Activated T-helper 2 cell treated with anti-CD3 and anti-CD28 coated beads, Interferon-gamma antibody, Interleukin-2, Interleukin-4, amounts not matched to agents 10 μg/mL and 5 μg/mL and 100 μg/mL, durations not matched to agents 14 hours and 24 hours and 36 hours (primary cell): ENCODE measurements at regions of chrX and their contacts with region 1.

Region 1: DNA sequence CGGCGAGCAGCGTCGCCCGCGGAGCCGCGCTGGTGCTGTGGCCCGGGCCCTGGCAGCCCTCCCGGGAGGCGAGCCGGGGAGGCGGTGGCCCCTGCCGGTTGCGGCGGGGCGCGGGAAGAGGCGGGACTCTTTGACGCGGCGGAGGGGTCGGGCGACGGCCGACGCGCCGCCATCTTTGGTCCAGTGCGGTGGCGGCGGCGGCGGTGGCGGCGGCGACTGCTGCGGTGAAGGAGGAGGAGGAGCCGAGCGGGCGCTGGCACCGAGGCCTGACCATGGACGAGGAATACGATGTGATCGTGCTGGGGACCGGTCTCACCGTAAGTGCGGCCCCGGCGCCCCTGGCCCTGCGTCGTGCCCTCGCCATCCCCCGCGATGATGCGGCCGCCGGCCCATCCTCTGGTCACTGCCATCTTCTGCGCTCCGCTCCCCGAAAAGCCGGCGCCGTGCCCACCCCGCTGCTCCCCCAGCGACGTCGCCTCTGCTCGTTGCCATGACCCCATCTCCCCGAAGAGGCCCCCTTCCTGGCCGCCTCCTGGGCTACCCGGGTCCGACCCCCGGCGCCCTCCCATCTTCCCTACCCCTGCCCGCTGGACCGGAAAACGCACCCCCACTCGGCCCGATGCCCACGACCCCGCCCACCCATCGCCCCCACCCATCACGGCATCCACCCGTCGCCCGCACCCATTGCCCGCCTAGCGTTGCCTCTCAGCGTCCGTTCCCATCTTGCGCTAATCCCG is at the start of gene GDI1:
- DNase-seq: peak; percentile 58
- H3K4me3 Mint-ChIP-seq: peak within 1 kb of the TSS; percentile 85
- H3K27ac Mint-ChIP-seq: peak within 1 kb of the TSS; percentile 78
- H3K4me1 Mint-ChIP-seq: peaks cover 8% of the 10 kb centered on the region
- H3K27me3 Mint-ChIP-seq: no peaks in the 10 kb centered on the region
- total RNA-seq, gene GDI1: 115 and 117 TPM in 2 replicates

Region 2: GRCh38 chrX:154397819-154398724 is 39.1 kb before region 1 on chrX and contains the start of gene RPL10:
- intact Hi-C with region 1: loop called (anchors 5 kb)
- DNase-seq: peak; percentile 93
- H3K4me3 Mint-ChIP-seq: peak within 1 kb of the TSS; percentile 100
- H3K27ac Mint-ChIP-seq: peak within 1 kb of the TSS; percentile 100
- H3K4me1 Mint-ChIP-seq: peaks cover 5% of the 10 kb centered on the region
- H3K27me3 Mint-ChIP-seq: no peaks in the 10 kb centered on the region
- total RNA-seq, gene RPL10: 2,692 and 2,787 TPM in 2 replicates

Region 3: GRCh38 chrX:154466907-154467622 is 29.9 kb after region 1 on chrX:
- intact Hi-C with region 1: no loop called
- DNase-seq: no peak
- H3K4me3 Mint-ChIP-seq: no peak overlapping the region
- H3K27ac Mint-ChIP-seq: no peak overlapping the region
- H3K4me1 Mint-ChIP-seq: no peaks in the 10 kb centered on the region
- H3K27me3 Mint-ChIP-seq: no peaks in the 10 kb centered on the region

Region 4: DNA sequence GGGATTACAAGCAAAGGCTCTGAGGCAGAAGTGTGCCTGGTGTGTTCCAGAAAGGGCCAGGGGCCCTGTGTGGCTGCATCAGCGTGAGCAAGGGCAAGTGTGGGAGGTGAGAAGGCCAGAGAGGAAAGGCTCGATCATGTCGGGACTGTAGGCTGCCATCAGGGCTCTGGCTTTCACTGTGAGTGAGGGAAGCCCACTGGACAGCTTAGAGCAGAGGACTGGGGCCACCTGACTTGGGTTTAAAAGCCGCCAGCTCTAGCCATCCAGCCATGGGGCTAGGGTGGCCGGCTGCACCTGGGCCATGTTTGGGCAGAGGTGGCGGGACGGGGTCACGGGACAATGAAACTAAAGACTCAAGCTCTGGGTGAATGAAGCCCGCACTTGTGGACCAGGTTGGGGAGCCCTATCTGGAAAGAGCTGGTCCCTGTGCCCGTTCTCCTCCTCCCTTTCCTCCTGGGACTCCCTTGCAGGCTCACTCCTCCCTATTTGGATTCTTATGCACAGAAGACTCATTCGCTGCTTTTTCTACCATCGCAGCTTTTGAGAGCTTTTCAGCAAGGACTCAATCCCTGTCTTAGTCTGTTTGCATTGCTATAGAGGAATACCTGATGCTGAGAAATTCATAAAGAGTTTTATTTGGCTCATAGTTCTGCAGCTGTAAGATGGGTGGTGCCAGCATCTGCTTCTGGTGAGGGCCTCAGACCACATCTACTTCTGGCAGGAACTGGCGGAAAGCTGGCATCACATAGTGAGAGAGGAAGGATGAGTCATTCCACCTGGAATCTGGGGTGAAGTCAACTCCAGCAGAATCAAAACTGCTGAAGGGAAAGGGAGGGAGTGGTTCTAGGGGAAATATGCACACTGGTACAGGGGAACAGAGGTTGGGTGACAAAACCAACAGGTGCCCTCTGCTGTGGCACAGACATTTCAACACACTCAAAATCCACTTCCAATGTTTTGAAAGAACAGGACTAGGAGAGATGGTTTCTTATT is 166.6 kb after region 1 on chrX:
- intact Hi-C with region 1: no loop called
- DNase-seq: no peak
- H3K4me3 Mint-ChIP-seq: no peak overlapping the region
- H3K27ac Mint-ChIP-seq: no peak overlapping the region
- H3K4me1 Mint-ChIP-seq: peaks cover 13% of the 10 kb centered on the region
- H3K27me3 Mint-ChIP-seq: peaks cover 3% of the 10 kb centered on the region

Region 5: DNA sequence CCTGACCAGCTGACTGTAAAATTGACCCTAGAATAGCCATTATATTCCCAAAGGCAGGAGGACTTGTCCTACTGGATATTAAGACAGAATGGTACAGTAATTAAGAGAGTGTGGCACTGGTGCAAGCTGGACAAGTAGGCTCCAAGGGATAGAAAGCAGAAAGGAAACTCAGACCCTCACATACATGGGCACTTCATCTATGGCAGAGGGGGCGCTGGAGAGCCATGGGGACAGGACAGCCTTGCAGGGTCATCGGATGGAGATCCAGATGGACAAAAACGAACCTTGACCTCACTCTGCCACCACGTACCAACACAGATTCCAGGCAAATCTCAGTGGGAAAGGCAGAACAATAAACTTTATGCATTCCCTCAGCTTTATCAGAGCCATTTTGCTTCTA is 273.2 kb after region 1 on chrX:
- intact Hi-C with region 1: no loop called
- DNase-seq: no peak
- H3K4me3 Mint-ChIP-seq: no peak overlapping the region
- H3K27ac Mint-ChIP-seq: no peak overlapping the region
- H3K4me1 Mint-ChIP-seq: peaks cover 30% of the 10 kb centered on the region
- H3K27me3 Mint-ChIP-seq: no peaks in the 10 kb centered on the region